ENCODE measurements at regions of chr7 and their contacts with region 1.

Region 1: DNA sequence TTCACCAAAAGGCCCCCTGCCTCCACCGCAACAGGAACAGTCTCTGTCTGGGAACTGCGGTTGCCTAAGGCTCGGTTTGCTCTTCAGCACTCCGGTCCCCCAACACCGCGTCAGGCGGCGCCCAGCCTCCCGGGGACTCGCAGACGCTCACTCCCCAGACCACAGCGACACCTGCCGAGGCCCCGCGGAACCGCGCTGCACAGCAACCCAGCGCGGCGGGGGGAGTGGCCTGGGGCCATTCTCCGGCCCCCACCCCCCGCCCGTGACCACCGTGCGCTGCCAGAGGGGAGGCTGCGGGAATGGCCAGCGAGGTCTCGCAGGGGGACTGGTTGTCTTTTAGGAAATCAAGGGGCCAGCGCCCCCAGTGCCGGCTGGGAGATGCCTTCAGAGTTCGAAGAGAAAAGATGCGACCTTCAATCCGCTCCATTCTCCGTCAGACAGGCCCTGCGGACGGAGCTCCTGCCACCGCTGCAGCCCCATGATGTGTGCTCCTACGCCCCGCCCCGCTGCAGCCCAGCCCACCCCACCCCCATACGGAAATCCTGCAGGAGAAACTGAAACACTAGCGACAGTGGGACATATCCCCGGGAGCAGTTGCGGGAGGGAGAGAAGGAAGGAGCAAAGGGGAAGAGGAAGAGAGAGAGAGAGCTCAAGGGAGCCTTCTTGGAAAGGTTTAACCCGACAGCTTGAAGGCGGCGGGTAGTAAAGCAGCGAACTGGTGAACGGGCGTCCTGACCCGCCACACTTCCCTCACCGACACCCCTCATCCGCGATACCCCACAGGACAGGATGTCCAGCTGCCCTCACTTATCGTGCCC is 137.4 kb upstream of the CDCA7L start:
- DNase-seq: peak; percentile 93
- ATAC-seq: peak; percentile 99

Region 2: DNA sequence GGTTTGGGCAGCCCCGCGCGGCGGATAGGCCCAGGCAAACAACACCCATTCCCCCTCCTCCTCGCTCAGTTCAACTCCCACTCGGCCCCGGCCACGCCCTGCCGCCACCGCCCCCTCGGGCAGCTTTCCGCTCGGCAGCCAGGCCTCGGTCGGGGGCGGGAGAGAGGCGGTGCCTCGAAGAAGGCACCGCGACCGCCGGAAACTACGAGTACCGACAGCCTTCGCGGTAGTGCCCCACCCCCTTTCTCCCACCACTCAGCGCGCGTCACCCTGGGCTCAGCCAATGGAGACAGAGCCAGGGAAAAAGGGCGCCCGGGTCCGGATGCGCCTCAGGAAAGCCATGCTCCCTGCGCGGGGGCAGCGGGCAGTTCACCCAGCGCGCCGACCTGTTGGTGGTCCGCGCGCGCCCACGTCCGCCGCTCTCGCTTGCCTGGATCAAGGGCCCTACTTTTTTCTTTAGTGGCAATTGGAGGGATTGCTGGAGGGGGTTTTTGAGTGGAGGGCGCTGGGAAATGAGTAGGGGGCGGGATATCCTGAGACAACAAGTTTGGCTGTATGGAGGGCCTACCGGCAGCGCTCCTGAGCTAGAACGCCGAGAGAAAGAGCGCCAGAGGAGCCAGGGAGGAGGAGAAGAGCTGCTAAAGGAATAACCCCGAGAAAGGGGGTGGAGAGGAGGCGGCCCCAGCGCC is 655.8 kb before region 1 on chr7:
- intact Hi-C with region 1: loop called (anchors 5 kb)
- DNase-seq: peak; percentile 100
- ATAC-seq: peak; percentile 94

Region 3: DNA sequence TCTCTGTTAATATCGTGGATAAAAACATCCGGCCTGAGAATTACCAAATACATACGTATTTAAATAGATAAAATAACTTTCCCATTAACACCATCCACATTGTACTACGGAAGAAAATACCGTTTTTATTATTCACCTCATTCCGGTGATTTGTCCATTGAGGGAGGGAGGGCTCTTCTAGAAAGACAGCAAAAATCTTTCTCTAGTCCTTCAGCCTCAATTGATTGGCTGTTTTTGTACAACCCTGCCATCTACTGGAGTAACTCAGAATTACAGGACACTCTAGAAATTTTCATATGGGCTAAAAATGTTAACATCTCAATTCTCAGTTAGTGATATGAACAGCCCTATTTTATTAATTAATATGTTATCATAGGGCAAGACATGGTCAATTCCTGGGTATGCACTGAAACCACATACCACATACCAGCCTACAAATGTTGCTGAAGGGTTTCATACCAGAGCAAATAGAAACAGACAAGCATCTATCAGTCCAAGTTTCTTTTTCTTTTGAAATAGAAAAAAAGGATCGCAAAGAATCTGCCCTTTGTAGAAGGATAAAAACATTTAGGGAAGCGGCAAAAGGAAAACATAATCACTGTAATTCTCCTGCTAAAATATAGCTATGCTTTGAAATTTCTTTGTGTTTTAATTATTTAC is 81.6 kb before region 1 on chr7:
- intact Hi-C with region 1: no loop called
- DNase-seq: no peak
- ATAC-seq: no peak

Measured in Right ventricle myocardium inferior (tissue), 1 donor.